ENCODE measurements at regions of chr11 and their contacts with region 1.

Region 1: DNA sequence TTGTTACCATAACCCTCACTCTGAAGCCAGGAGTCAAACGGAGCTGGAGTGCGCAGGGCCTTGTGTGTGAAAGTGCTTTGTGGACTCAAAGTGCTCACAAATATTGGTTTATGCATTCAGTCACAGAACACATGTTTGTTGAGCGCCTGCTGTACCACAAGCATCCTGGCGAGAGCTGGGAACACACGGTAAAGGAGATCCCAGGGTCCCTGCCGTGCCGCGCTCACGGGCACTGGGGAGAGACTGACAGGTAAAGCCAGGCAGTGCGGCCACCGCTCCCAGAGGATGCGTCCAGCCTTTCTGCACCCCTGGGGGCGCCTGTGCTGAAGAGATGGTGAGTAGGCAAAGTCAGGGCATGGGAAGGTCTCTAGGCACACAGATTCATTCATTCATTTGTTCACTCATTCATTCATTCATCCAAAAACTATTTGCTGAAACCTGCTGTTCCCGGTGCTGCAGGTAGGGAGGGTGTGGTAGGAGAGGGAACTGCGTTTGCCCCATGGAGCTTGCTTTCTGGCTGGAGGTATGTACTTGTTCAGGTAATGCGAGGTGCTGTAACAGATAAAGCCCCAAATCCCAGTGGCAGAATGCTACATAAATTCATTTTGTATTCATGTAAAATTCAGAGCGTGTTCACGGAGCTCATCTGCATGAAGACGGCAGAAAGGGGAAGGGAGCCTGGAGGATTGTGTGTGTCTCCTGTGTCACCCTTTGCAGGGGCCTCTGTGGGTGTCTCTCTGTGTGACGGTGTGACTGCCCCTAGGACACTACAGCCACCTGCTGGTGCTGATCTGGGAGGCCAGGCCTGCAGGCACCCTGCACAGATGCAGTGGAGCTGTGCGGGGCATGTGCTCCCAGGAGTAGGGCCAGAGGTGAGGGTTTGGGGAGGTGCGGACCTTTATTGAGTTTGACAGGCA is 167.0 kb upstream of the B3GAT1 start:
- DNase-seq: no peak
- ATAC-seq: peak; percentile 86
- H3K4me3 ChIP-seq: no peak overlapping the region
- H3K27ac ChIP-seq: no peak overlapping the region
- H3K4me1 ChIP-seq: no peaks in the 10 kb centered on the region
- H3K27me3 ChIP-seq: peaks cover 17% of the 10 kb centered on the region; the same call in 1 of the 2 replicates
- CTCF ChIP-seq: no peak; the same call in 1 of the 2 replicates

Region 2: GRCh38 chr11:134340354-134340964 is 238.6 kb before region 1 on chr11:
- CTCF ChIA-PET with region 1: no interaction called
- POLR2A ChIA-PET with region 1: no interaction called
- in situ Hi-C with region 1: no loop called
- intact Hi-C with region 1: no loop called
- DNase-seq: no peak
- ATAC-seq: no peak
- H3K4me3 ChIP-seq: no peak overlapping the region
- H3K27ac ChIP-seq: no peak overlapping the region
- H3K4me1 ChIP-seq: no peaks in the 10 kb centered on the region
- H3K27me3 ChIP-seq: no peaks in the 10 kb centered on the region
- CTCF ChIP-seq: no peak

Region 3: GRCh38 chr11:134360050-134360835 is 218.8 kb before region 1 on chr11:
- CTCF ChIA-PET with region 1: no interaction called
- POLR2A ChIA-PET with region 1: no interaction called
- in situ Hi-C with region 1: no loop called
- intact Hi-C with region 1: loop called (anchors 5 kb)
- DNase-seq: peak; percentile 51
- ATAC-seq: peak; percentile 98
- H3K4me3 ChIP-seq: no peak overlapping the region
- H3K27ac ChIP-seq: no peak overlapping the region
- H3K4me1 ChIP-seq: 0 out of 2 replicates have a peak, but pooled peaks cover 4% of the 10 kb centered on the region
- H3K27me3 ChIP-seq: no peaks in the 10 kb centered on the region
- CTCF ChIP-seq: peak; percentile 99

Region 4: DNA sequence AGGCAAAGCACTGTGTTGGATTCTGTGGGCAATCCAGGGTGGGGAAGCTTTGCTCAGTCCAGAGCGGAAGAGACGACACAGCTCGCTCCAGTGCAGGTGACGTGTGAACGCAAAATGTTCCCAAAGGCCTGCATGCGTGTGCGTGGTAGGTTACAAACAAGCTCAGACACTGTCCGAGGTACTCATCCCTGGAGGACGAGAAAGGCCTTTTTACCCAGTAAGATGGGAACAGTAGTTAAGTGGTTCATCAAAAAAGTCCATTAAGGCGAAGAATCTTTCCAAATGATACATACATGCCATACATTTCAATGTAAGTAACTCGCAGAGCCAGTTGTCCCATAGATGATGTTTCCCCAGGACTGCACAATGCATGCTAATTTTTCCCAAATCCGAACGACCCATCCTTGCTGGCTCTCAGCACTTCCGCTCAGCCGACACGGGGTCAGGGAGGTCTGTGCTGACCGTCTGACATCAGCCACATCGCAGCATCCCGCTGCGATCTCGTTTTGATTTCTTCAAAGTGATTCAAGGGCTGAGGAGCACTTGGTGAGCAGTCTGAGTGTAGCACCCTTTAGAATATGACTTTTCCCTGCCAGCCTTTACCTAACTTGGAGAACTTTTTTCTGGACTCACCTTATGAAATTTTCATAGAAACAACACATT is 186.0 kb before region 1 on chr11:
- CTCF ChIA-PET with region 1: no interaction called
- POLR2A ChIA-PET with region 1: interaction called, 10 read pairs
- in situ Hi-C with region 1: no loop called
- intact Hi-C with region 1: no loop called
- DNase-seq: no peak
- ATAC-seq: peak; percentile 33; the same call in 1 of the 2 replicates
- H3K4me3 ChIP-seq: no peak overlapping the region
- H3K27ac ChIP-seq: no peak overlapping the region
- H3K4me1 ChIP-seq: no peaks in the 10 kb centered on the region
- H3K27me3 ChIP-seq: peaks cover 6% of the 10 kb centered on the region
- CTCF ChIP-seq: no peak

Region 5: DNA sequence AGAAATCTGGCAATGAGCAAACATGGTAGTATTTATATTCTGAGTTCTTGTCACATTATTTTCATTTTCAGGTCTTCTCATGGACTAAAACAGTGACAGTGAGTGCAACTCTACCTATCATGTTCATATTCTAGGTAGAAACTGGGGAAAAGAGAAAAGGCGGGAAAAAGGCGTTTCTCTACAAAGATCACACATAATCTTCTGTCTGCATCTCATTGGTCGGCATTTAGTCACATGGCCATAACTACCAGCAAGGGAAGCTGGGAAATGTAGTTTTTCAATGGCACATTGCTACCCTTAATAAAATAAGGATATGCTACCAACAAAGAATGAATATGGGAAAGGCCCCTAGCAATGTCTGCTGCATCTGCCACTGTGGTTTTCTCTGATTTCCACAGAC is 109.4 kb before region 1 on chr11:
- CTCF ChIA-PET with region 1: no interaction called
- POLR2A ChIA-PET with region 1: no interaction called
- in situ Hi-C with region 1: no loop called
- intact Hi-C with region 1: no loop called
- DNase-seq: no peak
- ATAC-seq: no peak
- H3K4me3 ChIP-seq: no peak overlapping the region
- H3K27ac ChIP-seq: no peak overlapping the region
- H3K4me1 ChIP-seq: no peaks in the 10 kb centered on the region
- H3K27me3 ChIP-seq: peaks cover 33% of the 10 kb centered on the region
- CTCF ChIP-seq: no peak

Region 6: GRCh38 chr11:134516529-134516928 is 62.5 kb before region 1 on chr11:
- CTCF ChIA-PET with region 1: no interaction called
- POLR2A ChIA-PET with region 1: no interaction called
- in situ Hi-C with region 1: no loop called
- intact Hi-C with region 1: no loop called
- DNase-seq: no peak
- ATAC-seq: no peak
- H3K4me3 ChIP-seq: no peak overlapping the region
- H3K27ac ChIP-seq: no peak overlapping the region
- H3K4me1 ChIP-seq: no peaks in the 10 kb centered on the region
- H3K27me3 ChIP-seq: peaks cover 20% of the 10 kb centered on the region
- CTCF ChIP-seq: no peak

Measured in Panc1 (cell line).